Sciatic nerve (tissue), 2 donors: ENCODE measurements at regions of chr13 and their contacts with region 1.

Region 1: GRCh38 chr13:35014606-35015213 is 72.6 kb downstream of the NBEA start:
- DNase-seq: no peak
- ATAC-seq: no peak

Region 2: DNA sequence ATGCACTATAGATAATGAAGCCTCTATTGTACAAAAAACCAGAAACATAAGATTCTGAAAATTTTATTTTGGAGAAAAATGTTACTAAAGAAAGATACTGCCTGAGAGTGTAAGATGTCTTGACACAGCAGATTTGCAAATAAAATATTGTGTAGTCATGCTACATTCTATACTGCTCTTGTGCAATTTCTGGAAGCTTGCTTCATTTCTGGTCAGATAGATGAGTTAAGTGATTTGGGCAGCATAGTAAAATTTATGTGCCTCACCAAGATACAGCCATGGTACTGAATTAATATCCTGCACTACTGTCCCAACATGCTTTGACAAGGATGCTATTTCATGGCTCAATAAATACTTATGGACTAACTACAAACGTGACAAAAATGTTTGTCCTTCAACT is 1674.1 kb before region 1 on chr13:
- intact Hi-C with region 1: loop called (anchors 5 kb)
- DNase-seq: no peak
- ATAC-seq: no peak

Region 3: GRCh38 chr13:34822650-34823049 is 192.1 kb before region 1 on chr13:
- intact Hi-C with region 1: no loop called
- DNase-seq: no peak
- ATAC-seq: no peak